CD4-positive, alpha-beta memory T cell (primary cell): ENCODE measurements at regions of chr2 and their contacts with region 1.

Region 1: GRCh38 chr2:200811336-200812121 is at the start of gene BZW1:
- DNase-seq: peak; percentile 97 to 98 (median 98)
- H3K4me3 ChIP-seq: peak within 1 kb of the TSS; percentile 58 to 67
- H3K4me3 Mint-ChIP-seq: peak within 1 kb of the TSS; percentile 95 to 100 (median 98)
- H3K27ac ChIP-seq: peak within 1 kb of the TSS; percentile 97
- H3K27ac Mint-ChIP-seq: peak within 1 kb of the TSS; percentile 96 to 99 (median 98)
- H3K4me1 ChIP-seq: peaks cover 41% of the 10 kb centered on the region
- H3K4me1 Mint-ChIP-seq: peaks cover 35 to 62% (median 43%) of the 10 kb centered on the region in 4 donors
- H3K27me3 ChIP-seq: no peaks in the 10 kb centered on the region
- H3K27me3 Mint-ChIP-seq: no peaks in the 10 kb centered on the region
- total RNA-seq, gene BZW1: 126 to 133 TPM

Region 2: GRCh38 chr2:200888704-200889625 is 77.4 kb after region 1 on chr2 and contains the starts of genes NIF3L1 and PPIL3:
- CTCF ChIA-PET with region 1: no interaction called
- POLR2A ChIA-PET with region 1: interaction called, 23 read pairs
- intact Hi-C with region 1: loop called (anchors 1 kb)
- DNase-seq: peak; percentile 96 to 98 (median 96)
- H3K4me3 ChIP-seq: peak within 1 kb of the TSS; percentile 91 to 92
- H3K4me3 Mint-ChIP-seq: peak within 1 kb of the TSS; percentile 90 to 98 (median 96)
- H3K27ac ChIP-seq: peak within 1 kb of the TSS; percentile 85
- H3K27ac Mint-ChIP-seq: peak within 1 kb of the TSS; percentile 98 to 100 (median 99)
- H3K4me1 ChIP-seq: peaks cover 31% of the 10 kb centered on the region
- H3K4me1 Mint-ChIP-seq: peaks cover 30 to 57% (median 45%) of the 10 kb centered on the region in 4 donors
- H3K27me3 ChIP-seq: no peaks in the 10 kb centered on the region
- H3K27me3 Mint-ChIP-seq: no peaks in the 10 kb centered on the region
- total RNA-seq, gene NIF3L1: 30.0 to 30.3 TPM
- total RNA-seq, gene PPIL3: 48.0 to 57.7 TPM

Region 3: DNA sequence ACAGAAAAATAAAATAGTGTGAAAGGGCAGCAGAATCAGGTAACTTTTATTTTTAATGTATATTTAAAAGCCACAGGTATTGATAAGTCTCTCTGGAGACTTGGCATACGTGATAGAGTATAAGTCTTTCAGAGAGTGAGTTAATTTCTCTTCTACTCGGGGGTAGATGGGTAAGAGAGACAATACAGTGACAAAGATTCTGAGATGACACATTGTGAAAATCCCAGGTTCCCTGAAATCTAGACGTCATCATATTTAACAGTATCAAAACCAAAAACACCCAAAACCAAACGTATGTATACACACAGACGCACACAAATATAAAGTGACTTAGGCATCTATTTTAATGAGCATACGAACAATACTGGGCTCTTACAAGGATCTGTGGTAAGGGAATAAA is 110.9 kb after region 1 on chr2:
- CTCF ChIA-PET with region 1: no interaction called
- POLR2A ChIA-PET with region 1: no interaction called
- intact Hi-C with region 1: no loop called
- DNase-seq: no peak
- H3K4me3 ChIP-seq: no peak overlapping the region
- H3K4me3 Mint-ChIP-seq: no peak overlapping the region
- H3K27ac ChIP-seq: no peak overlapping the region
- H3K27ac Mint-ChIP-seq: peak overlapping the region in 5 of 7 donors; percentile 9 to 67 (median 47)
- H3K4me1 ChIP-seq: no peaks in the 10 kb centered on the region
- H3K4me1 Mint-ChIP-seq: peaks cover 0 to 3% (median 0%) of the 10 kb centered on the region in 4 donors
- H3K27me3 ChIP-seq: no peaks in the 10 kb centered on the region
- H3K27me3 Mint-ChIP-seq: no peaks in the 10 kb centered on the region

Region 4: DNA sequence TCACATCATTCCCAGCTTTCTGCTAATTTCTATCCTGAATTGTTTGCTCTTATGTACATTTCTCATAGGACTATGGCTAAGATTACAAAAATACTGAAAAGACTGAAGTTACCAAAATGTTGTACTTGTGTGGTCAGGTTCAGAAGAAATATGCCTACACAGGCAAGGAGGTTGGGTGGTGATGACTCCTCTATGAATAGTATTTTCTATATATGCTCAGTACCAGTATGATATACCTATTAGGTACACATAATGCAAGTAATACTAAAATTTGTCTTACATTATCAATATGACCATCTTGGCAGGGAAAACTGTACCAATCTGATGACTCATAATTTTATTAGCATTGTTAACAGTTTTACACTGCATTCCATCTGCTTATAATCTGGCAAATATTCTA is 164.1 kb after region 1 on chr2:
- CTCF ChIA-PET with region 1: no interaction called
- POLR2A ChIA-PET with region 1: no interaction called
- intact Hi-C with region 1: no loop called
- DNase-seq: no peak
- H3K4me3 ChIP-seq: no peak overlapping the region
- H3K4me3 Mint-ChIP-seq: no peak overlapping the region
- H3K27ac ChIP-seq: no peak overlapping the region
- H3K27ac Mint-ChIP-seq: peak overlapping the region in 3 of 7 donors; percentile 5 to 72 (median 6)
- H3K4me1 ChIP-seq: no peaks in the 10 kb centered on the region
- H3K4me1 Mint-ChIP-seq: peaks cover 0 to 1% (median 0%) of the 10 kb centered on the region in 4 donors
- H3K27me3 ChIP-seq: no peaks in the 10 kb centered on the region
- H3K27me3 Mint-ChIP-seq: no peaks in the 10 kb centered on the region

Region 5: DNA sequence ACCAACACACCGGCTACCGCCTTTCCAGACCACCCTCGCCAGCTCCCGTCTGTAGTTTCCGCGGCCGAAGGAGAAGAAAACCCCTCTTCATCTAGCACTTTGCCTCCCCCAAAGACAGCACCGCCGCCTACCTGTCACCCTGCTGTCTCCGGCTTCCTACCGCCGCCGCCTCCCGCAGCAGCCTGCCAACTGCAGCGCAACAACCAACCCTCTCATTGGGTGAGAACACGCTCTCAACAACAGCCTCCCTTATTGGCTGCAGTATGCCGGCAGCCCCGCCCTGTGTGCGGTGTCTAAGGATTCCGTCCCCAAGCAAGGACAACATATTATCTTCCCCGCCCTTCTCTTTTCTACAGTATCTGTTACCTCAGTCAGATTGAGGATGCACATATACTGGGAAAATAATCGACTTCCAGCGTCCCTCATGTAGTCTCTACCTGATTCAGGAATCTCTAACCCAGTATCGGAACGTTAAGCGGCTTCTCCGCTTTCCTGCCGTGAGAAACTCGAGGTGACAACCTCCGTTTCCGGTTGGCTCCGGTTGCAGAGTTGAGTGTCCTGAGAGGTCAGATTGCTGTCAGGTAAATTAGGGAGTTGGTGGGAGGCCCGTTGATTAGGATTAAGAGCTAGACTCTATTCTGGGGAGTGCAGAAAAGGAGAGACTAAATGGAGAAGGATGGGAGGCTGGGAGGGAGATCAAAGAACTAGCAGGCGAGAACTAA is 260.1 kb after region 1 on chr2 and contains the starts of genes HYCC2 and NDUFB3:
- CTCF ChIA-PET with region 1: no interaction called
- POLR2A ChIA-PET with region 1: interaction called, 3 read pairs
- intact Hi-C with region 1: loop called (anchors 1 kb)
- DNase-seq: peak; percentile 95 to 96 (median 95)
- H3K4me3 ChIP-seq: peak within 1 kb of the TSS; percentile 94 to 96
- H3K4me3 Mint-ChIP-seq: peak within 1 kb of the TSS; percentile 91 to 100 (median 98)
- H3K27ac ChIP-seq: peak within 1 kb of the TSS; percentile 79
- H3K27ac Mint-ChIP-seq: peak within 1 kb of the TSS; percentile 94 to 99 (median 98)
- H3K4me1 ChIP-seq: peaks cover 52% of the 10 kb centered on the region
- H3K4me1 Mint-ChIP-seq: peaks cover 35 to 62% (median 46%) of the 10 kb centered on the region in 4 donors
- H3K27me3 ChIP-seq: no peaks in the 10 kb centered on the region
- H3K27me3 Mint-ChIP-seq: peaks cover 0 to 2% of the 10 kb centered on the region in 2 donors
- total RNA-seq, gene HYCC2: 33.1 to 36.4 TPM
- total RNA-seq, gene NDUFB3: 48.7 to 53.6 TPM

Region 6: DNA sequence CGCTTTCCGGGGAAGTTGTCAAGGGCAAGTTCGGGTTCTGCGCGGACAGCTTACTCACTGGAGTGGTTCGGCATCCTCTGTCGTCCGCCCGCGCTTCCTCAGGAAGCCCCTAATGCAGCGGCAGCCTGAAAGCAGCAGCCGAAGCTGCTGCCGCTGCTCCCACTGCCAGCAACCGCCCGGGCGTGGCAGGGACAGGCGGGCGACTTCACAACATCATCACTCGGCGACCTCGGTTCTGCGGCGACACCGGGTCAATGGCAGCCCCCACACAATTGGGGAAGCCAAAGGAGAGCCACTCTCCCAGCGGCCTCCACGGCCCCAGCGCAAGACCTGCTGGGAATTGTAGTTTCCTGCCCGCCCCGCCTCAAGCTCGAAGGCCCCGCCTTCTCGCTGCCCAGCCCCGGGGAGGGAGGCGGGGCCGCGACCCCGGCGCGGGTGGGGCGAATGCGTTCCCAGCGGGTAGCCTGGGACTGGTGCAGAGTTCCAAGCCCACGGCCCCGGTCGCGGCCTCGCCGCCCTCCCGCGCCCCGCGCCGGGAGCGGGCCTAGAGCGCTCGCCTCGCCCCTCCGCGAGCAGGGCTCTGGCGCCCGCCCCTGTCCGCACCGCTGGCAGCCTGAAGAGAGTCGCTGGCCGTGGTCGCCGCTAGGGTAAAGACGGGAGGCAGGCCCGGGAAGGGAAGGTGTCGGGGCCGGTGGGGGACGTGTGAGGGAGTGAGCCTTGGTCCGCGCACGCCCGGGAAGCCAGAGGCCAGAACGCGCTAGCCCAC is 639.9 kb after region 1 on chr2 and contains the starts of genes STRADB and TRAK2:
- CTCF ChIA-PET with region 1: no interaction called
- POLR2A ChIA-PET with region 1: interaction called, 7 read pairs
- intact Hi-C with region 1: loop called (anchors 1 kb)
- DNase-seq: peak; percentile 93 to 98 (median 95)
- H3K4me3 ChIP-seq: peak within 1 kb of the TSS; percentile 38 to 93
- H3K4me3 Mint-ChIP-seq: peak within 1 kb of the TSS; percentile 94 to 99 (median 98)
- H3K27ac ChIP-seq: peak within 1 kb of the TSS; percentile 74
- H3K27ac Mint-ChIP-seq: peak within 1 kb of the TSS; percentile 95 to 98 (median 97)
- H3K4me1 ChIP-seq: peaks cover 49% of the 10 kb centered on the region
- H3K4me1 Mint-ChIP-seq: peaks cover 29 to 52% (median 41%) of the 10 kb centered on the region in 4 donors
- H3K27me3 ChIP-seq: no peaks in the 10 kb centered on the region
- H3K27me3 Mint-ChIP-seq: no peaks in the 10 kb centered on the region
- total RNA-seq, gene STRADB: 17.3 to 20.9 TPM
- total RNA-seq, gene TRAK2: 46.8 to 47.3 TPM

Region 7: GRCh38 chr2:202265467-202266277 is 1454.1 kb after region 1 on chr2 and contains the start of gene NOP58:
- CTCF ChIA-PET with region 1: no interaction called
- POLR2A ChIA-PET with region 1: no interaction called
- intact Hi-C with region 1: loop called (anchors 1 kb)
- DNase-seq: peak; percentile 91 to 96 (median 94)
- H3K4me3 ChIP-seq: peak within 1 kb of the TSS; percentile 92 to 97
- H3K4me3 Mint-ChIP-seq: peak within 1 kb of the TSS in 6 of 8 donors; percentile 55 to 79 (median 67)
- H3K27ac ChIP-seq: peak within 1 kb of the TSS; percentile 99
- H3K27ac Mint-ChIP-seq: peak within 1 kb of the TSS in 5 of 7 donors; percentile 48 to 91 (median 72)
- H3K4me1 ChIP-seq: peaks cover 39% of the 10 kb centered on the region
- H3K4me1 Mint-ChIP-seq: peaks cover 9 to 35% (median 16%) of the 10 kb centered on the region in 4 donors
- H3K27me3 ChIP-seq: no peaks in the 10 kb centered on the region
- H3K27me3 Mint-ChIP-seq: no peaks in the 10 kb centered on the region
- total RNA-seq, gene NOP58: 114 to 123 TPM